Activated T-helper 1 cell treated with anti-CD3 and anti-CD28 coated beads, Interleukin-12 subunit alpha, Interleukin-12 subunit beta, Interleukin-2, Interleukin-4 antibody, amounts not matched to agents 30 ng/mL and 10 ng/mL and 1 ng/mL, durations not matched to agents 14 hours and 24 hours and 36 hours (primary cell): ENCODE measurements at regions of chr3 and their contacts with region 1.

Region 1: DNA sequence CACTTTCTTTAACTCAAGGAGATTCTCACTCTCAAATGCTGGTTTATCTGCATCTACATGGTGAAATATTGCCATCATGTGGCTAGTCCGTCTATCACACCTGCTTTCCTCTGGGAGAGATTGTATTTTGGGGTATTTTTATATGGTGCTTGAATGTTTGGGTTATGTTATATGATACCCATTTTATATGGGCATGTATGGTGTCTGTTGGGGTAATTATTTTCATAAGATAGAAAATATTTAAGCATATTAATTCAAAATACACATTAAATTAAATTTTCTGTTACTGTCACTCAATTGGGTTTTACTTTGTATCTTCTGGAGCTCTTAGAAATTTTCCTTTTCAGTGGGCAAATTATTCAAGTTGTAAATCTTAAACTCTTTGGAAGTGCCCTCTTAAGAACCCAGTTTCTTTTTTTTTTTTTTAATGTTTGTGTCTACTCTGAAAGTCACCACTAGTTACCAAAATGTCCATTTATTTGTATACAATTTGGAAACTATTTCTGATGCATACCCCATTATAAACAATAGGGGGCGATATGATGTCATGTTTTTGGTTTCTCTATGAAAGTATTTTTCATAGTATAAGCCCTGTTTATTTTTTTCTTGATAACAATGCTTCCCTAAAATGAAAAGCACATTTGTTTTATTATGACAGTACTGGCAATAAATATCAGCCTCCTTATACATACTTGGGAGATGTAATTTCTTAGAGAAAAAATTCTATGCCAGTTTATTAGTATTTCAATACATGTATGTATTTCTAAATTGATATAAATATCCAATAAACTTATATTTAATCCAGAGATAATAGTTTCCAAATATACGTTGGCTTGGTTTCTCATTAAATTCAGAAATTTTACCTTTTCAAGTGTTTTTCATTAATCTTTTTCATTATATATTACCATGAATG is 36.1 kb upstream of the PLSCR5 start:
- DNase-seq: no peak
- H3K4me3 Mint-ChIP-seq: no peak overlapping the region
- H3K27ac Mint-ChIP-seq: no peak overlapping the region
- H3K4me1 Mint-ChIP-seq: no peaks in the 10 kb centered on the region
- H3K27me3 Mint-ChIP-seq: peaks cover 2% of the 10 kb centered on the region

Region 2: DNA sequence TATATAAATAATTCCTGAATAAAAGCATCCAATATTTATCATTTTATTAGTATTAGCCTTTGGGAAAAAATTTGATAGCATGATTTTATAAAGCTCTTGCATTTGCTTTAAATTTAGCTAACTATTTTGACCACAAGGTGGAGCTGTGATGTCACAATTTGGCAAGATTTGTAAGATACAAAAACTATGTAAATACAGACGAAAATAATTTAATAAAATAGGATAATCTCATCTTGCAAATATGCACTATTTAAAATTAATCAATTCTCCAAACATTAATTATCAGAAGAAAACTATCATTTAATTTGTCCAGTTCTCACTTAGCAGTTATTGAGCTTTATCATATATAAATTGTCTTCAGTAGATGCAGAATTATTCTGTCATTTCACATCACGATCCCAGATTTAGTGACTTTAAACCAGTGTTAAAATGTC is 575.6 kb before region 1 on chr3:
- intact Hi-C with region 1: loop called (anchors 2 kb)
- DNase-seq: no peak
- H3K4me3 Mint-ChIP-seq: no peak overlapping the region
- H3K27ac Mint-ChIP-seq: no peak overlapping the region
- H3K4me1 Mint-ChIP-seq: no peaks in the 10 kb centered on the region
- H3K27me3 Mint-ChIP-seq: no peaks in the 10 kb centered on the region

Region 3: GRCh38 chr3:146189519-146190173 is 451.6 kb before region 1 on chr3:
- intact Hi-C with region 1: loop called (anchors 1 kb)
- DNase-seq: no peak
- H3K4me3 Mint-ChIP-seq: no peak overlapping the region
- H3K27ac Mint-ChIP-seq: no peak overlapping the region
- H3K4me1 Mint-ChIP-seq: no peaks in the 10 kb centered on the region
- H3K27me3 Mint-ChIP-seq: peaks cover 13% of the 10 kb centered on the region

Region 4: GRCh38 chr3:146218880-146219866 is 422.0 kb before region 1 on chr3:
- intact Hi-C with region 1: loop called (anchors 1 kb)
- DNase-seq: no peak
- H3K4me3 Mint-ChIP-seq: no peak overlapping the region
- H3K27ac Mint-ChIP-seq: no peak overlapping the region
- H3K4me1 Mint-ChIP-seq: no peaks in the 10 kb centered on the region
- H3K27me3 Mint-ChIP-seq: peaks cover 9% of the 10 kb centered on the region

Region 5: GRCh38 chr3:146589899-146590508 is 51.2 kb before region 1 on chr3:
- intact Hi-C with region 1: loop called (anchors 1 kb)
- DNase-seq: no peak
- H3K4me3 Mint-ChIP-seq: no peak overlapping the region
- H3K27ac Mint-ChIP-seq: no peak overlapping the region
- H3K4me1 Mint-ChIP-seq: no peaks in the 10 kb centered on the region
- H3K27me3 Mint-ChIP-seq: peaks cover 26% of the 10 kb centered on the region

Region 6: DNA sequence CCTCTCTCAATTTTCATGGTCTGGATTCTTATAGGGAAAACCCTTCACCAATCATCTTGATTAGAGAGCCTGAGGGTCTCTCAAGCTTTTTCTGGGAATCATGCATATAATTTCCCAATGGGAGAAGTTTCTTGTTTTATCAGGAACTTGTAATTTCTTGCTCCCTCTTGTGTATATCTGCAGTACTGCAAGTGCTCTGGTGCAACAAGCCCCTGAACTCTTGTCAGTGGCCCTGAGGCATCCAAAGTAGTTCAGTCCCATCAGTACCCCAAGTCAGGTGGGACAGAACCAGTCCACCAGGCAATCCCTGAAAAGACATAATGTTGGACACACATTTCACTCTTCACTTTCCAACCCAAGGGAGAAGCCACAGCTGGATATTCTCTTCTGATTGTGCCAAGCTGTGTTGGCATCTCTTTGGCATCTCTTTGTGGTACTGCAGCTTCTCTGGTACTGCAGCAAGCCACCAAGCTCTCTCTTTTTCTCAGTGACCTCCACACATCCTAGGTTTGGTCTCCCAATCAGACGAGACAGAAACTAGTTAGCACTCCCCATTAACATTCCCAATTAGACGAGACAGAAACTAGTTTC is 550.7 kb after region 1 on chr3:
- intact Hi-C with region 1: loop called (anchors 2 kb)
- DNase-seq: no peak
- H3K4me3 Mint-ChIP-seq: no peak overlapping the region
- H3K27ac Mint-ChIP-seq: no peak overlapping the region
- H3K4me1 Mint-ChIP-seq: no peaks in the 10 kb centered on the region
- H3K27me3 Mint-ChIP-seq: no peaks in the 10 kb centered on the region